Thyroid gland (tissue), 4 donors: ENCODE measurements at regions of chr12 and their contacts with region 1.

Region 1: GRCh38 chr12:108193917-108194316 is 64.8 kb downstream of the WSCD2 start:
- DNase-seq: peak; percentile 58 to 63
- H3K4me3 ChIP-seq: no peak overlapping the region
- H3K27ac ChIP-seq: no peak overlapping the region
- H3K4me1 ChIP-seq: peaks cover 38 to 48% of the 10 kb centered on the region in 2 donors
- H3K27me3 ChIP-seq: no peaks in the 10 kb centered on the region
- CTCF ChIP-seq: peak; percentile 47 to 88 (median 83)
- POLR2A ChIP-seq: no peak

Region 2: GRCh38 chr12:108129017-108129812 is 64.7 kb before region 1 on chr12 and contains the start of gene WSCD2:
- intact Hi-C with region 1: loop called (anchors 10 kb)
- DNase-seq: peak; percentile 93 to 94
- H3K4me3 ChIP-seq: peak within 1 kb of the TSS; percentile 1 to 52 (median 49)
- H3K27ac ChIP-seq: peak within 1 kb of the TSS; percentile 80 to 92 (median 89)
- H3K4me1 ChIP-seq: peaks cover 22 to 29% of the 10 kb centered on the region in 2 donors
- H3K27me3 ChIP-seq: no peaks in the 10 kb centered on the region
- CTCF ChIP-seq: peak; percentile 29 to 84 (median 71)
- POLR2A ChIP-seq: peak in 1 of 2 donors; percentile 72
- total RNA-seq, gene WSCD2: 35.5 to 117 (median 81.4) TPM